ENCODE measurements at regions of chr1 and their contacts with region 1.

Region 1: GRCh38 chr1:8061210-8061609 is 35.1 kb upstream of the ERRFI1 start:
- DNase-seq: peak; percentile 89
- H3K4me3 Mint-ChIP-seq: no peak overlapping the region
- H3K27ac Mint-ChIP-seq: peak overlapping the region; percentile 88
- H3K4me1 Mint-ChIP-seq: peaks cover 23% of the 10 kb centered on the region
- H3K27me3 Mint-ChIP-seq: no peaks in the 10 kb centered on the region
- CTCF ChIP-seq: no peak

Region 2: GRCh38 chr1:7942214-7942921 is 118.8 kb before region 1 on chr1:
- CTCF ChIA-PET with region 1: no interaction called
- POLR2A ChIA-PET with region 1: no interaction called
- intact Hi-C with region 1: no loop called
- DNase-seq: no peak
- H3K4me3 Mint-ChIP-seq: no peak overlapping the region
- H3K27ac Mint-ChIP-seq: no peak overlapping the region
- H3K4me1 Mint-ChIP-seq: peaks cover 30% of the 10 kb centered on the region
- H3K27me3 Mint-ChIP-seq: peaks cover 30% of the 10 kb centered on the region
- CTCF ChIP-seq: no peak

Region 3: DNA sequence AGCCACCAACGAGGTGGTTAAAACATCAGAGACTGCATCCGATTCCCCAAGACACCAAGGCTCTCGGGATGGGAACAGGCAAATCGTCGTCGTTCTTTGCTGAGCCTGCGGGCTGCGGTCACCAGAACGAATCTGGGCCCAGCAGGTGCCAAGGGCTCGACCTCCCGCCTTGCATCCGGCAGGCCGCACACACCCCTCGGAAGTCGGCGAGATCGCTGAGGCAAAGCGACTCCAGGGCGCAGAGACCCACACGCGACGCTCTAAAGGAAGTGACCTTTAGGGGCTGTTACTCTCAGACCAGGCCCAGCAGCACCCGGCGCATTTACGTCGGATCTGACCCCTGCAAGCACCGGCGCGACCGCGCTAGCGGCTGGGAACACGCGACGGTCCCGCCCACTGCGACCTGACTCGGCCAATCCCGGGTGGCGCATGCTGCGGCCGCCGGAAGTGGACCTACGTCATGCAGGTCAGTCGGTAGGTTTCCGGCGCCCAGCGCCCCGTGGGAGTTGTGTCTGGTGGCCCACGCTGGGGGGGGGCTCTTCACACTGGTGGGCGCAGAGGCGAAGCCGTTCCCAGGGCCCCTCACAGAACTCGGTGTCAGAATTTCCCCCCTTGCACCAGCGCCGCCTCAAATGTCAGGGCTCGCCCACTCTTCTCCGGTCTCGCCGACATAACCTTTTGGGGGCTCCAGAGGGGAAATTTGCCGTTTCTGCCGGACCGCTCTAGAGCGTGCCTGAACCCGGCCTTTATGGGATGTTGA is 107.2 kb before region 1 on chr1:
- CTCF ChIA-PET with region 1: no interaction called
- POLR2A ChIA-PET with region 1: no interaction called
- intact Hi-C with region 1: no loop called
- DNase-seq: peak; percentile 73
- H3K4me3 Mint-ChIP-seq: peak overlapping the region; percentile 73
- H3K27ac Mint-ChIP-seq: peak overlapping the region; percentile 85
- H3K4me1 Mint-ChIP-seq: peaks cover 3% of the 10 kb centered on the region
- H3K27me3 Mint-ChIP-seq: no peaks in the 10 kb centered on the region
- CTCF ChIP-seq: no peak

Region 4: DNA sequence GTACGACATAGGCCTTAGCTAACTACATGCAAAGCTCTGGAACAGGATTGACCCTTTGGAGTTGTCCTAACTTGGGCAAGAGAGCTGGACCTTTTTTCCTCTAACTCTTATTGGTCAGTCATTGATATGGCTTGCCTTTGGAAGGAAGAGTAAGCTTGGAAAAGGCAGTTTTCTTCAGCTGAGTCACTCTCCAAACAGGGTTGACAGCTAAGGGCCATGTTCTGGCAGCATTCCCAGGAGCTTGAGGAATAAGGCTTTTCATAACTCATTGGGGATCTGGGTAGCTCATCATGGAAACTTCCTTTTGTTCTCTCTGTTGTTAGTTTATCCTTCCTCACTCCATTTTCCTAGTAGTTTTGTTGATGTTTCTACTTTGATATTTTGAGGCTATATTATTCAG is 20.6 kb before region 1 on chr1:
- CTCF ChIA-PET with region 1: no interaction called
- POLR2A ChIA-PET with region 1: interaction called, 13 read pairs
- intact Hi-C with region 1: no loop called
- DNase-seq: peak; percentile 99
- H3K4me3 Mint-ChIP-seq: no peak overlapping the region
- H3K27ac Mint-ChIP-seq: peak overlapping the region; percentile 66
- H3K4me1 Mint-ChIP-seq: peaks cover 30% of the 10 kb centered on the region
- H3K27me3 Mint-ChIP-seq: no peaks in the 10 kb centered on the region
- CTCF ChIP-seq: no peak

Region 5: GRCh38 chr1:8090241-8090702 is 29.1 kb after region 1 on chr1:
- CTCF ChIA-PET with region 1: no interaction called
- POLR2A ChIA-PET with region 1: interaction called, 11 read pairs
- intact Hi-C with region 1: no loop called
- DNase-seq: peak; percentile 49
- H3K4me3 Mint-ChIP-seq: no peak overlapping the region
- H3K27ac Mint-ChIP-seq: peak overlapping the region; percentile 91
- H3K4me1 Mint-ChIP-seq: peaks cover 55% of the 10 kb centered on the region
- H3K27me3 Mint-ChIP-seq: no peaks in the 10 kb centered on the region
- CTCF ChIP-seq: no peak